Endothelial cell of umbilical vein (primary cell): ENCODE measurements at regions of chr15 and their contacts with region 1.

Region 1: GRCh38 chr15:66661432-66662096 is 40.5 kb upstream of the SMAD6 start:
- DNase-seq: peak; percentile 28
- H3K4me3 ChIP-seq: no peak overlapping the region
- H3K27ac ChIP-seq: peak overlapping the region; percentile 63
- H3K4me1 ChIP-seq: peaks cover 36% of the 10 kb centered on the region
- H3K27me3 ChIP-seq: no peaks in the 10 kb centered on the region
- CTCF ChIP-seq: no peak
- POLR2A ChIP-seq: no peak

Region 2: DNA sequence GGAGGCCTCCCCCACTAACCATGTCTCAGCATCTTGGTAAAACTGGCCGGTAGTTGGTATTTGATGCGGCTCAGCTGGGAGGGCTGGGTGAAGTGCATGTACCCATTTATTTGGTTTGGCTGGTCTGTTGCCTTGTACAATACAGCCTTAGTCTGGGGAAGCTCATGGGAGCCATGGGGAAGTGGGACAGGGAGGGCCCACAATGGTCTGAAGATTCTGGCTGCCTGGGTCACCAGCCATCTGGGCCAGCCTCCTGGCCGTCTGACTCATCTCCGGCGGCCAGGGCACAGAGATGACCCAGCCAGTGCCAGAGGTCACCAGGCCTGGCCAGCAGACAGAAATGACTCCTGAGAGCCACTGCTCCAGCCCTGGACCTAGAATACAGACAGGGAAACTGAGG is 11.1 kb before region 1 on chr15:
- CTCF ChIA-PET with region 1: interaction called, 4 read pairs
- POLR2A ChIA-PET with region 1: no interaction called
- dilution Hi-C with region 1: no loop called
- intact Hi-C with region 1: loop called (anchors 1 kb)
- DNase-seq: peak; percentile 87
- H3K4me3 ChIP-seq: no peak overlapping the region
- H3K27ac ChIP-seq: peak overlapping the region; percentile 71
- H3K4me1 ChIP-seq: peaks cover 34% of the 10 kb centered on the region
- H3K27me3 ChIP-seq: no peaks in the 10 kb centered on the region
- CTCF ChIP-seq: no peak
- POLR2A ChIP-seq: no peak